ENCODE measurements at regions of chr14 and their contacts with region 1.

Region 1: DNA sequence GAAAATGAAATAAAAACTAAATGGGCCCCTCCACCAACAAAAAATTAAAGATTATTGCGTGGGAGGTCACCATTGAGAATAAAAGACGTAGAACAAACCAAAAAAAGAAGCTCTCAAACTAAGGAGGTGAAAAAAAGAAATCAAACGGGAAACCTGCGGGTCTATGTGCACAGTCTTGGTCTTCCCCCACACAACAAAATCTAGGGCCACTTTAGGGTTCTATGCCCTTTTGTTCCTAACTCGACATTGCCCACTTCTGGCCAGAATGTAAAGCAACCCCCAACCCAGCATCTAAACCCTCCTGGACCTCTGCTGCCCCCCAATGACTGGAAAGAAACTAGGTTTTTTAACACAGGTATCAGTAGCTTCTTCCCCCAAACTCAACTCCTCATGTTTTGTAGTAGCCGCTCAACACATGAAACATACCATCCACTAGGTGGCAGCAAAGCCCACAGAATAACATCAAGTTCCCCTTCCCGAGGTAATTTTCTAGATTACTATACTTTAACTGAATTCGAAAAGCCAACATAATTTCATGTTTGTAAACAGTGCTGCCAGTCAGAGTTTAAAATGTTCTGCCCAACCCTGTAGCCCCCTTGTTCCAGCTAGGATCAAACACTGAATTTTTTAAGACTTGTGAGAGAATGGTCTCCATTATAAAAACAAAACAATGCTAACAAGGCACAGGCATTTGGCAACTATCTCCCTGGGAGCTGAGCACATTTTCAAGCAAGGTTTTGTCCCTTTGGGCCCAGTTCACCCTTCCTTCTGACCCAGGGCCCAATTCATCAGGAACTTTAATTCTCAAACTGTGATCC is 18.7 kb downstream of the DAD1 start:
- DNase-seq: peak; percentile 89
- ATAC-seq: peak; percentile 80
- H3K4me3 Mint-ChIP-seq: peak overlapping the region; percentile 90
- H3K27ac Mint-ChIP-seq: peak overlapping the region; percentile 100
- H3K4me1 Mint-ChIP-seq: peaks cover 79% of the 10 kb centered on the region
- H3K27me3 Mint-ChIP-seq: no peaks in the 10 kb centered on the region

Region 2: GRCh38 chr14:21408147-21408546 is 1162.2 kb before region 1 on chr14:
- CTCF ChIA-PET with region 1: no interaction called
- POLR2A ChIA-PET with region 1: no interaction called
- intact Hi-C with region 1: no loop called
- DNase-seq: no peak
- ATAC-seq: no peak
- H3K4me3 Mint-ChIP-seq: no peak overlapping the region
- H3K27ac Mint-ChIP-seq: peak overlapping the region; percentile 40
- H3K4me1 Mint-ChIP-seq: peaks cover 10% of the 10 kb centered on the region
- H3K27me3 Mint-ChIP-seq: no peaks in the 10 kb centered on the region

Region 3: DNA sequence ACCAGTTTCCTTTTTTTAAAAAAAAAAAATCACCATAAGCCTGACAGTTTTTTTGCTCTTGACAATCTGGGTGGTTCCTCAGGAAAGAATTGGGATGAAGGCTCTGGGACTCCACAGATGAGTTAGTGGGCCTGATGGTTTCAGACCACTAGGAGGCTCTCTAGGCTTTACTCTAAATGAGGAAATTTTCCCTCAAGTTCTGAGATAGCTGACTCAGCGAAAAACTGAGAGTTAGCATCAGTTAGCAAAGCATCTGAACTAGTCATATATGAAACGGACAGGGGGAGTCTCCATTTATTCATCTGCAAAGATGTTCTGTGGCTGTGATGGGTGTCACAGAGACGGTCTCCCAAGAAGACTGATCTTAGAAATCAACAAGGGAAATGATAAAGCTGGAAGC is 582.4 kb before region 1 on chr14:
- CTCF ChIA-PET with region 1: interaction called, 19 read pairs
- POLR2A ChIA-PET with region 1: no interaction called
- intact Hi-C with region 1: no loop called
- DNase-seq: peak; percentile 25
- ATAC-seq: peak; percentile 72
- H3K4me3 Mint-ChIP-seq: peak overlapping the region; percentile 57
- H3K27ac Mint-ChIP-seq: peak overlapping the region; percentile 86
- H3K4me1 Mint-ChIP-seq: peaks cover 28% of the 10 kb centered on the region
- H3K27me3 Mint-ChIP-seq: peaks cover 2% of the 10 kb centered on the region

Region 4: DNA sequence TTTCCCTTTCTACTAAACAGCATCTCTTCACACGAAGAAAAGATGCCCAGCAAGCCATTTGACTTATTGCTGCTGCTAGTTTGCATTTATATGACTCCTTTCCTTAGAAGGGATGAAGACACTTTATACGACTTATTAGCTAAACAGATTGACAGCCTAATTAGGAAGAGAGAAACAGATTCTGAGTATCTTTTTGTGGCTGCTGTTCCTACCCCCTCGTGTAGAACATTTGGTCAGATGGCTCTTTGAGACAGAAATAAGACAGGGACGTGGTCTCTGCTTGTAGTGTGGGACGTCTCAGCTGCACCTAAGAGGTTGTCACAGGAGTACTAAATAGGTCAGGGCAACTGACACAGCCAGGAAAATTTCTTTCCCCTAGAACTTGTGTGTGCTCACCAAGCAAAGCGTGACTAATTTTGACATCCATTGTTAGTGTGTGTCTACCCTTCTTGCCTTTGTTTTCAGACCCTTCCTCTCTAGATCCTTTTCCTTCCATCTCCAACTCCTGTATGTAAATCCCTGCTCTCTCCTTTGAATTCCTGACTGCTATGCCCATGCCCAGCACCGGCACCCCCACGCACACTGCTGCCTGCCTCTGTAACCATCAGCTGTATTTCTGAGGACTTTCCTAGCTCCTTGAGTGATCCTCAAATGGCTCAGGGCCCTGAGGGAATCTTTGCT is 64.5 kb before region 1 on chr14:
- CTCF ChIA-PET with region 1: interaction called, 12 read pairs
- POLR2A ChIA-PET with region 1: interaction called, 5 read pairs
- intact Hi-C with region 1: no loop called
- DNase-seq: peak; percentile 51
- ATAC-seq: peak; percentile 34
- H3K4me3 Mint-ChIP-seq: peak overlapping the region; percentile 84
- H3K27ac Mint-ChIP-seq: peak overlapping the region; percentile 98
- H3K4me1 Mint-ChIP-seq: peaks cover 33% of the 10 kb centered on the region
- H3K27me3 Mint-ChIP-seq: no peaks in the 10 kb centered on the region

Region 5: GRCh38 chr14:22589096-22589839 is 18.9 kb after region 1 on chr14 and contains the start of gene DAD1:
- CTCF ChIA-PET with region 1: interaction called, 342 read pairs
- POLR2A ChIA-PET with region 1: interaction called, 8 read pairs
- intact Hi-C with region 1: loop called (anchors 1 kb)
- DNase-seq: peak; percentile 100
- ATAC-seq: peak; percentile 84
- H3K4me3 Mint-ChIP-seq: peak within 1 kb of the TSS; percentile 93
- H3K27ac Mint-ChIP-seq: peak within 1 kb of the TSS; percentile 97
- H3K4me1 Mint-ChIP-seq: peaks cover 72% of the 10 kb centered on the region
- H3K27me3 Mint-ChIP-seq: peaks cover 1% of the 10 kb centered on the region
- total RNA-seq, gene DAD1: 265 to 302 TPM

Region 6: GRCh38 chr14:22766456-22767322 is 196.3 kb after region 1 on chr14 and contains the start of gene OXA1L:
- CTCF ChIA-PET with region 1: interaction called, 35 read pairs
- POLR2A ChIA-PET with region 1: interaction called, 3 read pairs
- intact Hi-C with region 1: loop called (anchors 2 kb)
- DNase-seq: peak; percentile 98
- ATAC-seq: peak; percentile 87
- H3K4me3 Mint-ChIP-seq: peak within 1 kb of the TSS; percentile 90
- H3K27ac Mint-ChIP-seq: peak within 1 kb of the TSS; percentile 99
- H3K4me1 Mint-ChIP-seq: peaks cover 32% of the 10 kb centered on the region
- H3K27me3 Mint-ChIP-seq: no peaks in the 10 kb centered on the region
- total RNA-seq, gene OXA1L: 136 to 148 TPM

Region 7: DNA sequence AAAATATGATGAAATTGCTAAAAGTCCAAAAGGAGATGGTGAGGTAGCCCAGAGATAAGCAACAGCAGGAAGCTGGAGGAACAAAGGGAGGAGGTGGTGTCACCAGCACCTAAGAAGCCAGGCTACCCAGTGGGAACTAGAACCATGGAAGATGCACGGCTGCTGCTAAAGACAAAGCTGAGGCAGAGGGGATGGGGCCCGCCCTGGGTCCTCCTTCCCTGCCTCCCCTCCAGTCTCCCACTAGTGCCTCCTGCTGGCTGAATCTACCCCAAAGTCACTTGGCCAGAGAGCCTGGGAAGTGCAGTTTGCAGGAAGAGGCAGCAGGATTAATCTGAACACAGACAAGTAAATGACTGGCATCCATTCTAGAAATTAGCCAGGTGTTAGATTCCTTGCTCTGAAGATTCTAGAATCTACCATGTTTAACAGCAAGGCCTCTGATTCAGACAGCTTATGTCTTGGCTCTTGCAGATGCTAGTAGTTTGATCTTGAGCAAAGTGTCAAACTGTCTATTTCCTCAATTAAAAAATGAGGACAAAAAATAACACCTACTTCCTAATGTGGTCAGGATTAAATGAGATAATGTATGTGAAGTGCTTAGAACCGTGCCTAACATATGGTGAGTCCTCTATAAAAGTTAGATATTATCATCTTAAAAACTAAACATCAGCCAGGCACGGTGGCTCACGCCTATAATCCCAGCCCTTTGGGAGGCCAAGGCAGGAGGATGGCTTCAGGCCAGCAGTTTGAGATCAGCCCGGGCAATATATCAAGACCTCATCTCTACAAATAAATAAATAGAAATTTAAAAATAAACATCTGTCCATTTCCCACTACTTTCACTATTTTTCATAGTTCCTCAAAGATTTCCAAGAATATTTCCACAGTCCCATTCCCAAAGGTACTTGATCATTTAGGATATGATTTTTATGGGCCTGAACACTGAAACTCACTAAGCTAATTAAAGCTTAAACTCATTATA is 295.4 kb after region 1 on chr14:
- CTCF ChIA-PET with region 1: interaction called, 19 read pairs
- POLR2A ChIA-PET with region 1: no interaction called
- intact Hi-C with region 1: no loop called
- DNase-seq: peak; percentile 54
- ATAC-seq: peak; percentile 49
- H3K4me3 Mint-ChIP-seq: no peak overlapping the region
- H3K27ac Mint-ChIP-seq: no peak overlapping the region
- H3K4me1 Mint-ChIP-seq: peaks cover 20% of the 10 kb centered on the region
- H3K27me3 Mint-ChIP-seq: no peaks in the 10 kb centered on the region

Measured in activated CD4-positive, alpha-beta T cell treated with anti-CD3 and anti-CD28 coated beads for 36 hours (primary cell).